GM12878 (cell line): ENCODE measurements at regions of chr18 and their contacts with region 1.

Region 1: DNA sequence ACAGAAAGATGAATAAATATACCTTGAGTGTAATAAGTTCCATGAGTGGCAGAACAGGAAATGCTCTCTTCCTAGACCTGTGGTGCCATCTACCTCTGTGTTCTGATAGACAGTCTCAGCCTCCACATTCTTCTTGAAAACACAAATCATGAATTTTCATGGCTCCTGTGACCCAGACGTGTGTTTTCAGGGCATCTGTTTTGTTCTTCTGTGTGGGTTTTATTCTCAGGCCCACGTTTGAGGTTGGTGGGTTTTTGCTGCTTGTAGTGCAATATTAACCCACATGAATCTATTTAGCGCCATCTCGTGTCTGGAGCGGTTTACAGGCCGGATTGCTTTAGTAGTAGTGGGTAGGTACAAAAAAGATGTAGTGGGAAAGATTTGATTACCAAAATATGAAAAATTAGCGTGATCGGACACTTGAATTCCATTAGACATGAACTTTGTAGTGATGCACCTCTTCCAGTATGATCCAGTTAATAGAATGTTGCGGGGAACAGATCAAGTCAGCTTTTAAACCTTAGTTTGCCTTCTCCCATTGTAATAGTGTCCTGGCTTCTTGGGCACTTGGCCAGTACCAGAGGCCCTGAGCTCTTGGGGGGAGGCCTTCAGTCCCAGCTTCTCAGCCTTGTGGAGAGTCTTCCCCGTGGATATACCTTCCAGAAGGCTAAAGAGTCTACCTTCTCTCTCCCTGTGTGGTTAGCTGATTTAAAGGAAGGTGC is 256.5 kb downstream of the TPGS2 start:
- DNase-seq: peak; percentile 38
- ATAC-seq: peak; percentile 87
- H3K4me3 ChIP-seq: no peak overlapping the region
- H3K27ac ChIP-seq: no peak overlapping the region
- H3K4me1 ChIP-seq: no peaks in the 10 kb centered on the region
- H3K27me3 ChIP-seq: no peaks in the 10 kb centered on the region
- CTCF ChIP-seq: peak; percentile 55 to 74 (median 55)
- EP300 ChIP-seq: no peak
- POLR2A ChIP-seq: no peak
- RAD21 ChIP-seq: peak; percentile 76

Region 2: DNA sequence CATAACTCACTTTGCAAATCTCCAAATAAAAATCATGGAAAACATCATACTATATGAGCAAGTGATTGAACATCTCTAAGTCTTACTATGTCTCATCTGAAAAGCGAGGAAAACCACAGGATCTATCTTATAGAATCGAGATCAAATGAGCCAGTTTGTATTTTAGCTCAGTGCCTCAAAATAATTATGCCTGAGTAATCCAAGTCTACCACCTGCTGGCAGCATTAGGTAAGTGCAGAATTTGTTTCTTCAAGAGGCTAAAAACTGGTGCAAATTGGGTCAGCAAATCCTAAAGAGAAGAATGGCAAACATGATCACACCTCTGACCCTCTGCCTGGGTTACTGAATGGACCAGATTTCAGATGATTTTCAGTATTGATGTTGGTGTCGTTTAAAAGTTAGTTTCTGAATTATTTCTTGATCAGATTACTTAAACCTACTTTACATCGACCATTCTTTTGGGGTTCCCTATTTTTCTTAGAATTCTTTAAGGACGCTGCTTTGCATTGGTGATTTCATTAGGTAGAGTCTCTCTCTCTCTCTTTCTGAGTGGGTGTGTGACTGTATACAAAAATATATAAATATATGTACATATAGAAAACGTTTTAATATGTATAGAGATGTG is 287.5 kb before region 1 on chr18:
- CTCF ChIA-PET with region 1: interaction called, 40 read pairs
- POLR2A ChIA-PET with region 1: interaction called, 4 read pairs
- RAD21 ChIA-PET with region 1: interaction called, 33 read pairs
- SMC1A ChIA-PET with region 1: interaction called, 34 read pairs
- in situ Hi-C with region 1: no loop called
- intact Hi-C with region 1: loop called (anchors 1 kb)
- DNase-seq: peak; percentile 40
- ATAC-seq: peak; percentile 83
- H3K4me3 ChIP-seq: no peak overlapping the region
- H3K27ac ChIP-seq: no peak overlapping the region
- H3K4me1 ChIP-seq: no peaks in the 10 kb centered on the region
- H3K27me3 ChIP-seq: peaks cover 0 to 2% of the 10 kb centered on the region in 2 experiments; a peak in 2 of 4 replicates
- CTCF ChIP-seq: peak; percentile 76 to 92 (median 83)
- EP300 ChIP-seq: no peak
- POLR2A ChIP-seq: no peak
- RAD21 ChIP-seq: peak; percentile 99

Region 3: GRCh38 chr18:36411745-36412168 is 160.5 kb before region 1 on chr18:
- CTCF ChIA-PET with region 1: interaction called, 39 read pairs
- POLR2A ChIA-PET with region 1: no interaction called
- RAD21 ChIA-PET with region 1: interaction called, 23 read pairs
- SMC1A ChIA-PET with region 1: interaction called, 29 read pairs
- in situ Hi-C with region 1: no loop called
- intact Hi-C with region 1: loop called (anchors 5 kb)
- DNase-seq: no peak
- ATAC-seq: peak; percentile 79
- H3K4me3 ChIP-seq: no peak overlapping the region
- H3K27ac ChIP-seq: no peak overlapping the region
- H3K4me1 ChIP-seq: no peaks in the 10 kb centered on the region
- H3K27me3 ChIP-seq: no peaks in the 10 kb centered on the region
- CTCF ChIP-seq: peak; percentile 25 to 33 (median 31); a peak in 3 of 6 replicates
- EP300 ChIP-seq: no peak
- POLR2A ChIP-seq: no peak
- RAD21 ChIP-seq: peak; percentile 28; the same call in 1 of the 2 replicates

Region 4: GRCh38 chr18:36461551-36461987 is 110.7 kb before region 1 on chr18:
- CTCF ChIA-PET with region 1: interaction called, 9 read pairs
- POLR2A ChIA-PET with region 1: interaction called, 4 read pairs
- RAD21 ChIA-PET with region 1: interaction called, 9 read pairs
- SMC1A ChIA-PET with region 1: interaction called, 10 read pairs
- in situ Hi-C with region 1: no loop called
- intact Hi-C with region 1: no loop called
- DNase-seq: no peak
- ATAC-seq: no peak
- H3K4me3 ChIP-seq: no peak overlapping the region
- H3K27ac ChIP-seq: no peak overlapping the region
- H3K4me1 ChIP-seq: no peaks in the 10 kb centered on the region
- H3K27me3 ChIP-seq: no peaks in the 10 kb centered on the region
- CTCF ChIP-seq: no peak
- EP300 ChIP-seq: no peak
- POLR2A ChIP-seq: no peak
- RAD21 ChIP-seq: no peak

Region 5: DNA sequence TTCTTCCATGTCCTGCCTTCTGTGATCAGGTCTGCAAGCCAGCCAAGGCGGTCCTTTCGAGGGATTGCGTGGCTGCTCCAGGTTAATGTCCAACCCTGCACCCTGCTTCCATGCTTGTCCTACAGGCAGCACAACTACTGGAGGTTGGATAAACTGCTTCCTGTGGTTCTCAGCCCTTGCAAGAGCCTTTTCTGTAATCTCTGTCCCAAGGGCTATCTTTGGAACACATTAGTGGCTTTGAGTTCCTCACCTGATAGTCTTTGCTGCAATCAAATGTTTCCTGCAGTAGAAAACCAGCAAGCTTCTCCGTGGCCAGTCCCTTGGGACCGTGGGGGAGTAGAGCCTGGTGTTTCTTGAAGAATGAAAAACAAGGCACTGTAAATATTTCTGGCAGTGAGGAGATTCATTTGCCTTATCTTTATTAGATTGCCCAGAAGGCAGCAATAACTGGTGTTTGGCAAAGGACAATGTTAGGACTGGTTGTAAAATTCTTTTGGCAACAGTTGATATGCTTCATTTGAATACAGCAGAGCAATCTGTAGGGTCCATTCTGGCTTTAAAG is 60.4 kb before region 1 on chr18:
- CTCF ChIA-PET with region 1: interaction called, 19 read pairs
- POLR2A ChIA-PET with region 1: no interaction called
- RAD21 ChIA-PET with region 1: interaction called, 15 read pairs
- SMC1A ChIA-PET with region 1: interaction called, 16 read pairs
- in situ Hi-C with region 1: no loop called
- intact Hi-C with region 1: no loop called
- DNase-seq: no peak
- ATAC-seq: peak; percentile 37
- H3K4me3 ChIP-seq: no peak overlapping the region
- H3K27ac ChIP-seq: no peak overlapping the region
- H3K4me1 ChIP-seq: no peaks in the 10 kb centered on the region; the same call in 1 of the 2 replicates
- H3K27me3 ChIP-seq: no peaks in the 10 kb centered on the region
- CTCF ChIP-seq: no peak
- EP300 ChIP-seq: no peak
- POLR2A ChIP-seq: no peak
- RAD21 ChIP-seq: no peak

Region 6: DNA sequence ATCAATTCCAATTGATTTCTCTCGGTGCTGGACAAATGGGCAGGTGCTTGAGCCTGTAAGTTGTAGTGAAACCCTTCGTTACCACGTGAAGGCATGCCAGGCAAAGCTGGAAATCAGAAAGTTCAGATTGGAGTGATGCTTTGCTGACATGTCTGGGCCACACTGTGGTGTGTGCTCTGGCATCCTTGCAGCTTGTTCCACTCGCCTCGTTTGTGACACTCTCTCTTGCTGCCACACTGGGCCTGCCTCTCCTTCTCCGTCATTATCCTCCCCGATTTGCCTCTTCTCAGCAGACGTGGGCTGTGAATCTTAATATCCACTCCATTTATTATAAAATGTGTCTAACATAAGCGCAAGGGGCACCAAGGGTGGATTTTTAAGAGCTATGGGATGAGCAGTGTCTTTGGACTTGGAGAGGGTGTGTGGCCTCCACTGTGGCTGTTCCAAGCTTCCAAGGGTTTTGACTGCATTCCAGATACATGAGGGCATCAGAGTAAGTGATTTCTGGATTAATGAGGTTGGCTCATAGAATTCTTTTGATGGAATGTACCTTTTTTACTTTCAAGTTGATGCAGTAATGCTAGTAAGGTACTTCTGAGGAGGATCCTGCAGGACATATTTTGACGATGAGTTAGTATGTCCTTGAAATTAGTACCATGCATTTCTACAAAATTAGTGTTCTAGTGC is 17.7 kb after region 1 on chr18:
- CTCF ChIA-PET with region 1: interaction called, 12 read pairs
- POLR2A ChIA-PET with region 1: no interaction called
- RAD21 ChIA-PET with region 1: no interaction called
- SMC1A ChIA-PET with region 1: interaction called, 6 read pairs
- in situ Hi-C with region 1: no loop called
- intact Hi-C with region 1: no loop called
- DNase-seq: no peak
- ATAC-seq: no peak
- H3K4me3 ChIP-seq: no peak overlapping the region
- H3K27ac ChIP-seq: no peak overlapping the region
- H3K4me1 ChIP-seq: no peaks in the 10 kb centered on the region
- H3K27me3 ChIP-seq: no peaks in the 10 kb centered on the region
- CTCF ChIP-seq: no peak
- EP300 ChIP-seq: no peak
- POLR2A ChIP-seq: no peak
- RAD21 ChIP-seq: no peak

Region 7: DNA sequence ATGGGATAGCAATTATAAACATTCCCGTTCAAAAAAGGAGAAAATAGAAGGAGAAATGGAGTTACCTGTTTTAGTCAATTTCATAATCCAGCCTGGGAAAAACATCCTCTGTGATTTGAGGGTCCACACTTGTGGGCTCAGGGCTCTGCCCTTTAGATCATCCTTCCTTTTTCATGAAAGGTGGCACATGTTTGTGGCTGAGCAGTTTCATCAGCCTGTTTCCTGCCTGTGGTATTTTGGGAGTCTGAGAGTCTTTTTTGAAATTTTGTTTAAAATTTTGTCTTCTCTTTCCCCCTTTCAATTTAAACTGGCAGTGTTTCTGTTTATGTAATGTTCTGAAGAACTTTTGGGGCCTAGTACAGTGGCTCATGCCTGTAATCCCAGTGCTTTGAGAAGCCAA is 340.6 kb after region 1 on chr18:
- CTCF ChIA-PET with region 1: no interaction called
- POLR2A ChIA-PET with region 1: no interaction called
- RAD21 ChIA-PET with region 1: no interaction called
- SMC1A ChIA-PET with region 1: no interaction called
- in situ Hi-C with region 1: no loop called
- intact Hi-C with region 1: no loop called
- DNase-seq: peak; percentile 5
- ATAC-seq: peak; percentile 46
- H3K4me3 ChIP-seq: no peak overlapping the region
- H3K27ac ChIP-seq: 0 out of 2 replicates have a peak overlapping the region, but pooled peaks have one; percentile 29
- H3K4me1 ChIP-seq: peaks cover 4% of the 10 kb centered on the region
- H3K27me3 ChIP-seq: no peaks in the 10 kb centered on the region
- CTCF ChIP-seq: no peak
- EP300 ChIP-seq: no peak
- POLR2A ChIP-seq: no peak
- RAD21 ChIP-seq: no peak